Natural killer cell (primary cell): ENCODE measurements at regions of chr21 and their contacts with region 1.

Region 1: GRCh38 chr21:41283211-41283818 is 33.3 kb upstream of the FAM3B start:
- DNase-seq: peak in 1 of 2 donors; percentile 84
- ATAC-seq: peak; percentile 71 to 88 (median 85)
- H3K4me3 ChIP-seq: no peak overlapping the region
- H3K4me3 Mint-ChIP-seq: no peak overlapping the region
- H3K27ac ChIP-seq: no peak overlapping the region
- H3K27ac Mint-ChIP-seq: no peak overlapping the region
- H3K4me1 ChIP-seq: no peaks in the 10 kb centered on the region
- H3K4me1 Mint-ChIP-seq: no peaks in the 10 kb centered on the region
- H3K27me3 ChIP-seq: no peaks in the 10 kb centered on the region
- H3K27me3 Mint-ChIP-seq: peaks cover 17 to 51% of the 10 kb centered on the region in 2 donors
- CTCF ChIP-seq: peak; percentile 78

Region 2: GRCh38 chr21:41228021-41228400 is 55.3 kb before region 1 on chr21:
- intact Hi-C with region 1: loop called (anchors 10 kb)
- DNase-seq: no peak
- ATAC-seq: no peak
- H3K4me3 ChIP-seq: no peak overlapping the region
- H3K4me3 Mint-ChIP-seq: no peak overlapping the region
- H3K27ac ChIP-seq: no peak overlapping the region
- H3K27ac Mint-ChIP-seq: no peak overlapping the region
- H3K4me1 ChIP-seq: no peaks in the 10 kb centered on the region
- H3K4me1 Mint-ChIP-seq: no peaks in the 10 kb centered on the region
- H3K27me3 ChIP-seq: no peaks in the 10 kb centered on the region
- H3K27me3 Mint-ChIP-seq: peaks cover 6 to 11% of the 10 kb centered on the region in 2 donors
- CTCF ChIP-seq: no peak

Region 3: DNA sequence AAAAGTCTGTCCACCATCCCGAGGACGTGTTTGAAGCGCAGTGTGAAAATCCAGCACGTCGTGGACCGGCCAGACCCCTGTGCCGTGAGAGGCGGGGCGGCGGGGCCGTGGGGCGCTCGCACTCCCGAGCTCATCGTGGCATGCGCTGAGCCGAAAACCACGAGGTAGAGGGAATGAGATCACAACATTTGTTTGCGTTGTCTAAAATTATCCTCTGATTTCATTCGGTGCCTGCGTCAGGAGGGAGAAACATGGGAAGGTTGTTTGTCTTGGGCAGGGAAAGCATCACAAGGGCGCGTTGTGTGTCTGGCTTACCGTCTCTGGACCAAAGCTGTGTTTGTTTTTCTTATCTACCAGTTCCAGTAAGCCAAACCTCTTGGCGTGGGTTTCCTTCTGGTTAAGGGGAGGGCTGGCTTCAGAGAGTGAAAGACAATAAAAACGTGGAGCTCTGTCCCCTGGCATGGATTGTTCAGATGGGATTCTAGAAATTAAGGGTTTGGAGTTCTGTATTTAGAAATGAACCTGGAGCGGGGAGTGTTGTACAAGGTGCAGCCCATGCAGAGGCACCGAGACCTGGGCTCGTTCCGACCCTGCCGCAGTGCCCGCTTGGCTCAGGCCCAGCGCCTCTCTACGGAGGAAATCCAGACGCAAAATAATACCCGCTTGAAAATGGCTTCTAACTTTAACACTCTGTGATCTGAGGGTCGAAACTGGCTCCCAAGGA is 35.6 kb before region 1 on chr21:
- intact Hi-C with region 1: no loop called
- DNase-seq: no peak
- ATAC-seq: no peak
- H3K4me3 ChIP-seq: no peak overlapping the region
- H3K4me3 Mint-ChIP-seq: no peak overlapping the region
- H3K27ac ChIP-seq: no peak overlapping the region
- H3K27ac Mint-ChIP-seq: no peak overlapping the region
- H3K4me1 ChIP-seq: no peaks in the 10 kb centered on the region
- H3K4me1 Mint-ChIP-seq: no peaks in the 10 kb centered on the region
- H3K27me3 ChIP-seq: no peaks in the 10 kb centered on the region
- H3K27me3 Mint-ChIP-seq: peaks cover 0 to 11% of the 10 kb centered on the region in 2 donors
- CTCF ChIP-seq: no peak

Region 4: GRCh38 chr21:41294539-41295231 is 11.4 kb after region 1 on chr21:
- intact Hi-C with region 1: no loop called
- DNase-seq: no peak
- ATAC-seq: no peak
- H3K4me3 ChIP-seq: no peak overlapping the region
- H3K4me3 Mint-ChIP-seq: no peak overlapping the region
- H3K27ac ChIP-seq: no peak overlapping the region
- H3K27ac Mint-ChIP-seq: no peak overlapping the region
- H3K4me1 ChIP-seq: peaks cover 6% of the 10 kb centered on the region
- H3K4me1 Mint-ChIP-seq: peaks cover 9 to 10% of the 10 kb centered on the region in 2 donors
- H3K27me3 ChIP-seq: no peaks in the 10 kb centered on the region
- H3K27me3 Mint-ChIP-seq: peaks cover 25 to 27% of the 10 kb centered on the region in 2 donors
- CTCF ChIP-seq: no peak

Region 5: GRCh38 chr21:41460578-41461527 is 177.5 kb after region 1 on chr21:
- intact Hi-C with region 1: loop called (anchors 1 kb)
- DNase-seq: peak in 1 of 2 donors; percentile 72
- ATAC-seq: peak; percentile 59 to 70 (median 61)
- H3K4me3 ChIP-seq: no peak overlapping the region
- H3K4me3 Mint-ChIP-seq: no peak overlapping the region
- H3K27ac ChIP-seq: no peak overlapping the region
- H3K27ac Mint-ChIP-seq: peak overlapping the region in 1 of 2 donors; percentile 29
- H3K4me1 ChIP-seq: no peaks in the 10 kb centered on the region
- H3K4me1 Mint-ChIP-seq: no peaks in the 10 kb centered on the region
- H3K27me3 ChIP-seq: no peaks in the 10 kb centered on the region
- H3K27me3 Mint-ChIP-seq: no peaks in the 10 kb centered on the region
- CTCF ChIP-seq: peak; percentile 59

Region 6: DNA sequence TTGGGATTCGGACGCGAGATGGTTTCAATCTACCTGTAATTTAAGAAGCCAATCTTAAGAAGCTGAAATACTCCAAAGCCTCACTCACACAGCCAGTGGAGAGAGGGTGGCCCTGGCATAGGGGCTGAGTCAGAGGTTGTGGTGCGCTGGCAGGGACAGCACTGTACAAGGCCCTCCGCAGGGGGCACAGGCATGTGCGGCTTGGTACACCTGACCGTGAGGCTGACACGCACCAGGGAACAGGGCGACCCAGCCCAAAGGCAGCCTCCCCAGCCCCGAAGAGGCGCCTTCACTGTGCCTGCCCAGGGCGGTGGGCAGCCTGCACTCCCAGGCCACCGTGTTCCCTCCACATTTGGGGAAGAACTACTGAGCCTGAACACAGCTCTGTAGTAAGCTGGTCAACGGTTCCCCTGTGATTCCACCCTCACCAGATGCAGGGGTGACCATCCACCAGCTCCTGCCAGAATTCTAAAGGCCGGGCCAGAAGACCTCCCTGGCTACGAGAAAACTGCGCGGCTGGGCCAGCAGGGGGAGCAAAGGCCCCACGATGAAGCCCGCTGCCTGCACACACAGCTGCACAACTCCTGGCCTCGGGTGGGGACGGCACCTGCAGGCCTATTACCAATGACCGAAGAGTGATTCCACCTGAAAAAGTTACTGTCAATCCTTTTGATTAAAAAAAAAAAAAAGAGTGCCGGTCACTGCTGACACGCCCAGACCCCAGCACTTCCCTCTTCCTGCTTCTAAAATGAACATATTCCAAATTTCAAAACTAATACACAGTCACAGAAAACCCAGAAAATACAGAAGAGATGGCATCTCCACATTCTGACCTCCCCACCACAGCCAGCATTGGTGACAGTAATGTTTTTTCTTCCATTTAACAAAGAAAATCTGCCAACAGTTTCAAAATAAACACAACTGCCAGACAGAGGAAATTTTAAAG is 533.2 kb after region 1 on chr21:
- intact Hi-C with region 1: loop called (anchors 5 kb)
- DNase-seq: peak; percentile 39 to 78
- ATAC-seq: peak in 2 of 3 donors; percentile 55 to 75
- H3K4me3 ChIP-seq: no peak overlapping the region
- H3K4me3 Mint-ChIP-seq: no peak overlapping the region
- H3K27ac ChIP-seq: no peak overlapping the region
- H3K27ac Mint-ChIP-seq: no peak overlapping the region
- H3K4me1 ChIP-seq: no peaks in the 10 kb centered on the region
- H3K4me1 Mint-ChIP-seq: no peaks in the 10 kb centered on the region
- H3K27me3 ChIP-seq: no peaks in the 10 kb centered on the region
- H3K27me3 Mint-ChIP-seq: no peaks in the 10 kb centered on the region
- CTCF ChIP-seq: peak; percentile 77

Region 7: GRCh38 chr21:41933313-41934086 is 650.2 kb after region 1 on chr21:
- intact Hi-C with region 1: no loop called
- DNase-seq: no peak
- ATAC-seq: no peak
- H3K4me3 ChIP-seq: no peak overlapping the region
- H3K4me3 Mint-ChIP-seq: peak overlapping the region; percentile 17
- H3K27ac ChIP-seq: no peak overlapping the region
- H3K27ac Mint-ChIP-seq: no peak overlapping the region
- H3K4me1 ChIP-seq: peaks cover 25% of the 10 kb centered on the region
- H3K4me1 Mint-ChIP-seq: peaks cover 17 to 19% of the 10 kb centered on the region in 2 donors
- H3K27me3 ChIP-seq: peaks cover 3% of the 10 kb centered on the region
- H3K27me3 Mint-ChIP-seq: peaks cover 25 to 26% of the 10 kb centered on the region in 2 donors
- CTCF ChIP-seq: no peak

Region 8: DNA sequence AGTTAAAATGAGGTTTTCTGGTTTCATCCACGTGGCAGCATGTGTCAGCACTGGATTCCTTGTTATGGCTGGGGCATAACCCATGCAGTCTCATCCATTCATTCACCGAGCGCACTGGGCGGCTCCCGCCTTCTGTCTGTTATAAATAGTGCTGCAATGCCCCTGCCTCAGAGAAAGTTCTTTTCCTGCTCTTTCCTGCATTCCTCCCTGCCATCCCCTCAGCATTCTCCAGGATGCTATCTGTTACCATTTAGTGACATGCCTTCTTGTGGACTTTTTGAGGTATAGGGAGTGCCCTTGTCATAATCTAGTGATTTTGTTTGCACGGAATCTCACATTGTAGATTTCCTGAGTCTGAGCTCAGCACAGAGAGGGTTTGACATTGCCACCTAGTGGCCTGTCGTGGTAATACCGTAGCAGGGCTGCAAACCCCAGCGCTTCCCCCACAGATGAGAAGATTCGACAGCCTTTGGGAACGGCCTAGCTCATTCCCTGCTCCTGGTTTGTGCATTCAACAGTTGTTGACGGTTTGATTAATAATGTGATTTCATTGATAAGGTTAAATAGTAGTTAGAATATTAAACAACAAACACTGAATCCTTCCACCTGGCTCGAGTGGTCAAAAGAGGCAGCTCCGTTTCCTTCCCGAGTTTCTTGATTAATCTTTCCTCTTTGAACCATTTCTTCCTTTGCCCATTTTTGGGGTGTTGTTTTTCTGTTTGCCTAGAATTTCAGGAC is 834.1 kb after region 1 on chr21:
- intact Hi-C with region 1: loop called (anchors 1 kb)
- DNase-seq: peak; percentile 67 to 88
- ATAC-seq: peak; percentile 76 to 96 (median 90)
- H3K4me3 ChIP-seq: no peak overlapping the region
- H3K4me3 Mint-ChIP-seq: no peak overlapping the region
- H3K27ac ChIP-seq: no peak overlapping the region
- H3K27ac Mint-ChIP-seq: no peak overlapping the region
- H3K4me1 ChIP-seq: peaks cover 16% of the 10 kb centered on the region
- H3K4me1 Mint-ChIP-seq: peaks cover 18 to 20% of the 10 kb centered on the region in 2 donors
- H3K27me3 ChIP-seq: peaks cover 24% of the 10 kb centered on the region
- H3K27me3 Mint-ChIP-seq: peaks cover 66 to 82% of the 10 kb centered on the region in 2 donors
- CTCF ChIP-seq: peak; percentile 90